CD8-positive, alpha-beta memory T cell (primary cell): ENCODE measurements at regions of chr1 and their contacts with region 1.

Region 1: GRCh38 chr1:64864018-64864940 is 102.1 kb downstream of the JAK1 start:
- DNase-seq: peak; percentile 40 to 81 (median 49)
- H3K4me3 ChIP-seq: no peak overlapping the region
- H3K4me3 Mint-ChIP-seq: peak overlapping the region in 6 of 7 donors; percentile 30 to 66 (median 62)
- H3K27ac ChIP-seq: peak overlapping the region; percentile 55
- H3K27ac Mint-ChIP-seq: peak overlapping the region; percentile 76 to 97 (median 88)
- H3K4me1 ChIP-seq: peaks cover 31% of the 10 kb centered on the region
- H3K4me1 Mint-ChIP-seq: peaks cover 51 to 66% (median 59%) of the 10 kb centered on the region in 3 donors
- H3K27me3 ChIP-seq: no peaks in the 10 kb centered on the region
- H3K27me3 Mint-ChIP-seq: no peaks in the 10 kb centered on the region

Region 2: GRCh38 chr1:64877151-64877550 is 12.9 kb after region 1 on chr1:
- CTCF ChIA-PET with region 1: interaction called, 3 read pairs
- POLR2A ChIA-PET with region 1: interaction called, 11 read pairs
- DNase-seq: peak in 4 of 5 donors; percentile 33 to 88 (median 74)
- H3K4me3 ChIP-seq: peak overlapping the region; percentile 6
- H3K4me3 Mint-ChIP-seq: peak overlapping the region; percentile 72 to 84 (median 83)
- H3K27ac ChIP-seq: no peak overlapping the region
- H3K27ac Mint-ChIP-seq: peak overlapping the region in 7 of 8 donors; percentile 76 to 98 (median 86)
- H3K4me1 ChIP-seq: peaks cover 55% of the 10 kb centered on the region
- H3K4me1 Mint-ChIP-seq: peaks cover 78 to 90% (median 89%) of the 10 kb centered on the region in 3 donors
- H3K27me3 ChIP-seq: no peaks in the 10 kb centered on the region
- H3K27me3 Mint-ChIP-seq: peaks cover 0 to 5% of the 10 kb centered on the region in 2 donors

Region 3: DNA sequence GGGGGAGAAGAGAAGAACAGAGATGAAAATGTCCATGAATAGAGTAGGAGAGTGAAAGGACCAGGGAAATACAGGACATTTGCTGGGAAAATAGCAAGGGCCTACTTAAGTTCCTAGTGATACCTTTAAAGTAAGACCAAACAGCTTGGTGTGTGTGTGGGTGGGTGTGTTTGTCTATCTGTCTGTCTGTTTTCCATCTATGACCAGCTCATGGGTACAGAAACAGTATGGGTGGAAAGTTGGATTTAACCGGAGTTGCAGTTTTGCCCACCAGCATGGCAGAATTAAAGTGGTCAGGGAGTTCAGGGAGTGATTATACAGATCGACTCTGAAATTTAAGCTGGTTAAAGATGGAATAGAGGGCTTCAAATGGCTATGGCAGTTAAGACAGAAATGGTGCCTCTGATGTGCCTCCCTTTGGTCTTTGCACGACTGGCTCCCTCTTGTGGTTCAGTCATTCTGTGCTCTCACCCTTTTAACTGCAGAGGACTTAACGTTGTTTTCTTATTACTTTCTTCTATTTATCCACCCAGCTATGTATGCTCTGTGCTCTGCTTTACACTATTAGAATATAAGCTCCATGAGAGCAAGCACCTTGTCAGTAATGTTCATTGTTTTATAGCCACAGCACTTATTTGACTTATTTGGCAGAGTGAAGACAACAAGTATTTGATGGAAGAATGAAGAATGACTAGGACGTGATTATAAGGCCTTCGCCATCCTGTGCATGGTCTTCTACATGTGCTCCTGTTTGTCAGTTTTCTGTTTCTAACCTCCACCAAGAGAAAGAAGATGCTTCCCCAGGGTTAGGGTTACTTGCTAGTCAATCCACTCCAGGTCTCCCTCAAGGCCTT is 211.1 kb after region 1 on chr1:
- CTCF ChIA-PET with region 1: interaction called, 12 read pairs
- POLR2A ChIA-PET with region 1: no interaction called
- DNase-seq: peak; percentile 39 to 78 (median 66)
- H3K4me3 ChIP-seq: no peak overlapping the region
- H3K4me3 Mint-ChIP-seq: peak overlapping the region in 1 of 7 donors; percentile 2
- H3K27ac ChIP-seq: no peak overlapping the region
- H3K27ac Mint-ChIP-seq: peak overlapping the region in 2 of 8 donors; percentile 43 to 60
- H3K4me1 ChIP-seq: peaks cover 6% of the 10 kb centered on the region
- H3K4me1 Mint-ChIP-seq: peaks cover 6 to 20% (median 20%) of the 10 kb centered on the region in 3 donors
- H3K27me3 ChIP-seq: no peaks in the 10 kb centered on the region
- H3K27me3 Mint-ChIP-seq: peaks cover 0 to 12% of the 10 kb centered on the region in 2 donors